ENCODE measurements at regions of chr1 and their contacts with region 1.

Region 1: DNA sequence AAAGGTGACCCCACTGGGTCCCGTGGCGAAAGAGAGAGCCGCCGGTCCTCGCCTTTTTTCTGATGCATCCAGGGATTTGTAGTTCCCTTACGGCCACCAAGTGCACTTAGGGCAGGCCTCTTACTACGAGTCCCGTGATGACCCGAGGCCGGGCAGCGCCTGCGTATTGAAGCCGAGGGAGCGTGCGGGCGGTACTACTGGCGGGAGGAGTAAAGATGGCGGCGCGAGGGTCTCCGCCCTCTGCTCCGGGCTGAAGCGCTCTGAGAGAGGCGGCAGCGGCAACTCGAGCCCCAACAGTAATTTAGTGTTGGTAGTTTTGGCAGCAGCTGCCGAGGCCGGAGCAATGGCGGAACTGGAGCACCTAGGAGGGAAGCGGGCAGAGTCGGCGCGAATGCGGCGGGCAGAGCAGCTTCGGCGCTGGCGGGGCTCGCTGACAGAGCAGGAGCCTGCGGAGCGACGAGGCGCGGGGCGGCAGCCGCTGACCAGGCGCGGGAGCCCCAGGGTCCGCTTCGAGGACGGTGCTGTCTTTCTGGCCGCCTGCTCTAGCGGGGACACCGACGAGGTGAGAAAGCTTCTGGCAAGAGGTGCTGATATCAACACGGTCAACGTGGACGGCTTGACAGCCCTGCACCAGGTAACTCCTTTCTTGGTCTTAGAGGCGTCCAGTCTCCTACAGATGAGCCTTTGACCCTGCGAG is at the start of gene PPP1R12B:
- DNase-seq: peak; percentile 97
- H3K4me3 Mint-ChIP-seq: peak within 1 kb of the TSS; percentile 81
- H3K27ac Mint-ChIP-seq: peak within 1 kb of the TSS; percentile 81
- H3K4me1 Mint-ChIP-seq: peaks cover 27% of the 10 kb centered on the region
- H3K27me3 Mint-ChIP-seq: no peaks in the 10 kb centered on the region
- total RNA-seq, gene PPP1R12B: 8.2 to 8.6 TPM

Region 2: GRCh38 chr1:202270871-202271326 is 77.8 kb before region 1 on chr1:
- CTCF ChIA-PET with region 1: no interaction called
- POLR2A ChIA-PET with region 1: no interaction called
- intact Hi-C with region 1: no loop called
- DNase-seq: no peak
- H3K4me3 Mint-ChIP-seq: no peak overlapping the region
- H3K27ac Mint-ChIP-seq: no peak overlapping the region
- H3K4me1 Mint-ChIP-seq: no peaks in the 10 kb centered on the region
- H3K27me3 Mint-ChIP-seq: peaks cover 15% of the 10 kb centered on the region

Region 3: GRCh38 chr1:202291961-202292712 is 56.5 kb before region 1 on chr1:
- CTCF ChIA-PET with region 1: no interaction called
- POLR2A ChIA-PET with region 1: no interaction called
- intact Hi-C with region 1: loop called (anchors 5 kb)
- DNase-seq: no peak
- H3K4me3 Mint-ChIP-seq: no peak overlapping the region
- H3K27ac Mint-ChIP-seq: no peak overlapping the region
- H3K4me1 Mint-ChIP-seq: peaks cover 19% of the 10 kb centered on the region
- H3K27me3 Mint-ChIP-seq: no peaks in the 10 kb centered on the region

Region 4: DNA sequence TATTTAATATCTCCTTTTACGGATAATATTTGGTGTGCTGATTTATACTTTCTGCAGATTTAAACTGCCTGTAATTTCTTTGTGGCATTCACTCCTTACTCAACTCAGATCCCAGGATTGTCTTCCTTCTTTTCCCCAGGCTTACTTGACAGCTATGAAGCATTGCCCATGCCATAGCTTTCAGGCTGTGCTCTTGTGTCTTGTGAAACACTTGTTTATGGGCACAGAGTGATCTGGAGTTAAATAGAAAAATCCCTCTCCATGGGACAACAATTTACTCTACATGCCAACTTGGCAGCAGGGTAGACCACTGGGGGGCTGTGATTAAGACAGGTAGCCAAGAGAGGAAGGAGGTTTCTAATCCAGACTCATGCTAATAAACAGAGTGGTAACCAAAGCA is 57.3 kb after region 1 on chr1:
- CTCF ChIA-PET with region 1: interaction called, 3 read pairs
- POLR2A ChIA-PET with region 1: no interaction called
- intact Hi-C with region 1: loop called (anchors 10 kb)
- DNase-seq: no peak
- H3K4me3 Mint-ChIP-seq: no peak overlapping the region
- H3K27ac Mint-ChIP-seq: no peak overlapping the region
- H3K4me1 Mint-ChIP-seq: peaks cover 28% of the 10 kb centered on the region
- H3K27me3 Mint-ChIP-seq: no peaks in the 10 kb centered on the region

Region 5: GRCh38 chr1:202571347-202572339 is 223.0 kb after region 1 on chr1:
- CTCF ChIA-PET with region 1: interaction called, 6 read pairs
- POLR2A ChIA-PET with region 1: interaction called, 3 read pairs
- intact Hi-C with region 1: loop called (anchors 2 kb)
- DNase-seq: peak; percentile 40
- H3K4me3 Mint-ChIP-seq: no peak overlapping the region
- H3K27ac Mint-ChIP-seq: no peak overlapping the region
- H3K4me1 Mint-ChIP-seq: no peaks in the 10 kb centered on the region
- H3K27me3 Mint-ChIP-seq: no peaks in the 10 kb centered on the region

Region 6: GRCh38 chr1:202716654-202717053 is 368.0 kb after region 1 on chr1:
- CTCF ChIA-PET with region 1: interaction called, 27 read pairs
- POLR2A ChIA-PET with region 1: no interaction called
- intact Hi-C with region 1: loop called (anchors 1 kb)
- DNase-seq: no peak
- H3K4me3 Mint-ChIP-seq: no peak overlapping the region
- H3K27ac Mint-ChIP-seq: no peak overlapping the region
- H3K4me1 Mint-ChIP-seq: peaks cover 2% of the 10 kb centered on the region
- H3K27me3 Mint-ChIP-seq: peaks cover 14% of the 10 kb centered on the region

Region 7: DNA sequence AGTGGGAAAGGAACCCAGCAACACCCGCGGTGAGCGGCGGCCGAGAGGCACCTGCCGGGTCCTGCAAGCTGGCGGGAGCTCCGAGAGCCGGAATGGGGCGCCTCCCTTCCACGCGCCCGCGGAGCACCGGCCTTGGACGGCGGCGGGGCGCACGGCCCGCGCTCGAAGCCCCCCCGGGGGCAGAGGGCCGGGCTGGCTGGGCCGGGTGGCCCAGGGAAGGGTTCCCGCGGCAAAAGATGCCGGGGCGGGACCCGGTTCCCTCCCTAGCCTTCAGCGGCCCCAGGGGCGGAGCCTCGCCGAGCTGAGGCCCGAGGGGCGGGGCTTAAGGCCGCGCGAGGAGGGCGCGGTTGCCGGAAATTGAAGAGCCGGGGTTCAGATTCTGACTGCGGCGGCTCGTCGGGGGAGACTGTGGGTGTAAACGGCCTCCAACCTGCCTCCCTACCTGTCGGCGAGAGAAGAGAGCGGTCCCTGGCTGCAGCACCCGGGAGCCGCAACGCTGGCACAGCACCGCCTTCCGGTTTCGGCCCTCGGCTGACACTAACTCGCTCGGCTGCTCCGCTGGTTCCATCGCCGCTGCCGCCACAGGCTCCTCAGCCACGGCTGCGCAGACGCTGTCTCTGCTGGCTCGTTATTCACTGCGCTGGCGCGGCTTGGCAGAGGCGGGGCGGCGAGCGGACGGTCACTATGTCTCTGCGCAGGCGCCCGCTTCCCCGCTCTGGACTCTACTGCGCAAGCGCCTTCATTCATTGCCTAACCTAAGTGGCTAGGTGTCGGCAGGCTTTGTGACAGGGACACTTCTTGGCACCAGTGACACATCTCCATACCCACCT is 540.1 kb after region 1 on chr1 and contains the start of gene RABIF:
- CTCF ChIA-PET with region 1: no interaction called
- POLR2A ChIA-PET with region 1: no interaction called
- intact Hi-C with region 1: loop called (anchors 2 kb)
- DNase-seq: peak; percentile 98
- H3K4me3 Mint-ChIP-seq: peak within 1 kb of the TSS; percentile 93
- H3K27ac Mint-ChIP-seq: peak within 1 kb of the TSS; percentile 98
- H3K4me1 Mint-ChIP-seq: peaks cover 22% of the 10 kb centered on the region
- H3K27me3 Mint-ChIP-seq: no peaks in the 10 kb centered on the region
- total RNA-seq, gene RABIF: 9.6 to 10.1 TPM

Measured in activated CD4-positive, alpha-beta memory T cell treated with anti-CD3 and anti-CD28 coated beads for 36 hours (primary cell).